ENCODE measurements at regions of chr7 and their contacts with region 1.

Region 1: DNA sequence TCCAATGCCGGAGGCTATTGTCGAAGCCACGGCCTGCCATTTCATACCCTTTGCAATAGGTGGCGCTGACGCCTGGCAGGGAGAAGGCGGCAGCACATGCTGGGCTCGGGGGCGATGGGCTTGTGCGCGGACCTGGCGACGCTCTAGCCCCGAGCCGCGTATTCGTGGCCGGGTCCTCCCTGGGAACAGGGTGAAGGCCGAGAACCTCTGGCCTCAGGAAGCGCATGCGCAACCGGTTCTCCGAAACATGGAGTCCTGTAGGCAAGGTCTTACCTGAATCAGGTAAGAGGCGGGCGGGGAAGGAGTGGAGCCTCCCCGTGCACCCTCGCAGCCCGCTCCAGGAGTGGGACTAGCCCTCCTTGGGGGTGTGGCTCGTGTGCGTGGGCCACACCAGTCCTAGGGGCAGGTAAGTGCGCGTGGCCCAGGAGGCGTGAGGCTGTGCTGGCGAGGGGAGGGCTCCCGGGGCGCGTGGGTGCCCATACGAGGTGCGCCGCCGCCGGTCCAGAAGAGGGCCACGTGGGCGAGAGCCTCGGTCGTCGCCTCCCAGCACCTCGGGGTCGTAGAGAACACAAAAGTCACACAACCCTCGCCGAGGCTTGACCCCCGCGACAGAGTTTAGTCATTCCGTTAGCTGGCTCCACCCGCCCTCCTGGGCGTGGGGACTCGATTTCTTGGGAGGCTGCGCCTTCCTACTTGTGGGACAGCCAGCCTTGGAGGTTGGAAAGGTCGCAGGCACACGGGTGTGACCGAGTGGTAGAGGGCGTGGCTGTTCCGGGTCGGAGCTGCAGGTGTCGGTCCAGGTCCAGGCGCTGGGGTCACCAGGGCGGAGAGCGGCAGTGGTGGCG is 5.5 kb upstream of the MEST start:
- DNase-seq: no peak
- H3K4me3 ChIP-seq: peak overlapping the region; percentile 38
- H3K27ac ChIP-seq: no peak overlapping the region
- H3K27me3 ChIP-seq: no peaks in the 10 kb centered on the region
- CTCF ChIP-seq: peak; percentile 59

Region 2: GRCh38 chr7:130180571-130181262 is 305.6 kb before region 1 on chr7:
- CTCF ChIA-PET with region 1: no interaction called
- POLR2A ChIA-PET with region 1: interaction called, 10 read pairs
- DNase-seq: no peak
- H3K4me3 ChIP-seq: no peak overlapping the region
- H3K27ac ChIP-seq: no peak overlapping the region
- H3K27me3 ChIP-seq: no peaks in the 10 kb centered on the region
- CTCF ChIP-seq: no peak

Region 3: DNA sequence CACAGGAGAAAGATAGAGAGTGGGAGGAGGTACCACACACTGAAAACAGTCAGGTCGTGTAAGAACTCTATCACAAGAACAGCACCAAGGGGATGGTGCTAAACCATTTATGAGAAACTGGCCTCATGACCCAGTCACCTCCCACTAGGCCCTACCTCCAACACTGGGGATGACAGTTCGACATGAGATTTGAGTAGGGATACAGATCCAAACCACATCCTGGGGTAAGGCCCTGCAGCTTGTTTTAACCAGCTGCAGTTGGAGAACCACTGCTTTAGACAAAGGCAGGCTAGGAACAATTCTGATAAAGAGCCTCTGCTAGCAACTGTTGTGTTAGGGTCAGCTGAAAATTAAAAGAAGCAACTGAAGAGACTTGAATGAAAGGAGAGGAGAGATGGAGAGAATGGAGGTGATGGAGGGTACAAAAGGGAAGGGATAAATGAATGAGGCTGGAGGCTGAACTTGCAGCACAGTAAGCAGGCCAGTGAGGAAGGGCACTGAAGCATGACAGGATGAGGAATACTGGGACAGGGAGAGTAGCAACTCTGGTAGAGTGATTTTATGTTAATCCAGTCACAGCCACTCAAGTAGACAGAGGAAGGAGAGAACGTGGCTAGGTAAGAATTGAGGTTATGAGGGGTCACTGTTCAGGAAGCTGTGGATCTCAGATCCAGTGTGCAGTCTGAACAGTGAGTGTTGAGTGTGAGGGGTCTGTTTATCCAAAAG is 29.1 kb after region 1 on chr7:
- CTCF ChIA-PET with region 1: no interaction called
- POLR2A ChIA-PET with region 1: no interaction called
- DNase-seq: no peak
- H3K4me3 ChIP-seq: no peak overlapping the region
- H3K27ac ChIP-seq: no peak overlapping the region
- H3K27me3 ChIP-seq: no peaks in the 10 kb centered on the region
- CTCF ChIP-seq: no peak

Region 4: DNA sequence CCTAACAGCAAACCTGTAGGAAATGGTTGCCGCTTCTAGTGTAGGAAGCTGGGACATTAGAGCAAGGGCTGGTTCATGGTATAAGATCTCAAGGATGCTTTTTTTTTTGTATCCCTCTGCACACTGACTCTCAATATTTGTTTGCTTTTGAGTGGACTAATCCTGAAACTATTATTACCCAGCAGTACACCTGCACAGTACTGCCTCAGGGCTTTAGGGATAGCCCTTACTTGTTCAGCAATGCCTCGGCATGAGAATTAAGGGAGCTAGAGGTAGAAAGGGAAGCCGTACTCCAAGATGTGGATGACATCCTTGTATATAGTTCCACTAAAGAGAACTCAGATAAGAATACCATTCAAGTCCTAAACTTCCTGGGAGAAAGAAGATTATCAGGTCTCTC is 111.7 kb after region 1 on chr7:
- CTCF ChIA-PET with region 1: no interaction called
- POLR2A ChIA-PET with region 1: no interaction called
- DNase-seq: no peak
- H3K4me3 ChIP-seq: no peak overlapping the region
- H3K27ac ChIP-seq: no peak overlapping the region
- H3K27me3 ChIP-seq: no peaks in the 10 kb centered on the region
- CTCF ChIP-seq: no peak

Region 5: DNA sequence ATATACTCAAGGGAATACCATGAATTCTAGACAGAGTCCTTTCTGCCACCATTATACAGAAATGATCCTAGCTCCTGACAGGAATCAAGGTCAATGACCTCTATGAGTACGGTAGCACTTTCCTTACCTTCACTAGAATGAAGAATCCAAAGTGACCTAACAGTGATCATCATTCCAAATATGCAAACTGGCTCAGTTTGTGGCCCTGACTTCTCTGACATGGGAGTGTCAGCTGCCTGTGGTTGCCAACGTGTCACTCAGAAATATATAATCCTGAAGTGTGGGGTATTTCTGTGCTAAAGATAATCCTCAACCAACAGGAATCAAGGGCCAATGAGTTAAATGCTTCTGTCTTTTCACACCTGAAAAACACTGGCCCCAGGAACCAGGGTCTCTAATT is 136.5 kb after region 1 on chr7:
- CTCF ChIA-PET with region 1: no interaction called
- POLR2A ChIA-PET with region 1: no interaction called
- DNase-seq: no peak
- H3K4me3 ChIP-seq: no peak overlapping the region
- H3K27ac ChIP-seq: no peak overlapping the region
- H3K27me3 ChIP-seq: no peaks in the 10 kb centered on the region
- CTCF ChIP-seq: no peak

Region 6: DNA sequence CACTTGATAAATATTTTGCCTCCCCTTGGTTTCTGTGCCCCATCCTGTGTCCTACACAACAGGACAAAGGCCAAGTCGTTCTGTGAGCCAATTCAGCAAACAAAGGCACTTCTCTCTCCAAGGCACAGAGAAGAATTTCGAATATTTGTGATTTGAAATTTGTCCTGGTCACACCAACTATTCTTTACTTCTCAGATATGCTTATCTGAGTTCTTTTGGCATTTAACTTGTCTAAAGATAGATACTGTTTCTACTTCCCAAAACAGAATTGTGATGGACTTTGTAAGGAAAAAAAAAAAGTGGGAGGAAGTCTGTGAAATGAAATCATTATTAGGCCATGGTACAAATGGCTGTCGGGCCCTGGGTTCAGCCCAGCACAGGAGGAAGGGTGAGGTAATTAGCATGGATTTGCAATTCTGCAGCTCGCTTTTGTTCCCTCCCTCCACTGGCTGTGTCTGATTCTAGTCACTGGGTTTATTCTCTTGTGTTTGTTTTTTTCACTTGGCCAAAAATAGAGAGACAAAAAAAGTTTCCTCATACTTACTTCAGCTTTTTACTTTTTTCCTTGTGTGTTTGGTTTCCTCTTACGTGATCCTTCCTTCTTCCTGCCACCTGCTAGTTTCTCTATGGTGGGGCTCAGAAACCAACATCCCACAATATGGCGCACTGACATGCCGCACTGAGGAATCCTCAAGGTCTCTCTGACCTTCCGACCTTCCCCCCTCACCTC is 733.1 kb after region 1 on chr7:
- CTCF ChIA-PET with region 1: no interaction called
- POLR2A ChIA-PET with region 1: no interaction called
- DNase-seq: no peak
- H3K4me3 ChIP-seq: no peak overlapping the region
- H3K27ac ChIP-seq: no peak overlapping the region
- H3K27me3 ChIP-seq: no peaks in the 10 kb centered on the region
- CTCF ChIP-seq: no peak